ENCODE measurements at regions of chr18 and their contacts with region 1.

Region 1: GRCh38 chr18:32018331-32019250 is at the start of gene RNF125:
- DNase-seq: peak; percentile 83 to 97 (median 95)
- ATAC-seq: peak; percentile 87
- H3K4me3 ChIP-seq: peak within 1 kb of the TSS; percentile 89
- H3K4me3 Mint-ChIP-seq: peak within 1 kb of the TSS; percentile 87 to 99 (median 96)
- H3K27ac ChIP-seq: peak within 1 kb of the TSS; percentile 87
- H3K27ac Mint-ChIP-seq: peak within 1 kb of the TSS; percentile 87 to 99 (median 96)
- H3K4me1 ChIP-seq: peaks cover 34% of the 10 kb centered on the region in 2 donors
- H3K4me1 Mint-ChIP-seq: peaks cover 36 to 72% (median 57%) of the 10 kb centered on the region in 7 donors
- H3K27me3 ChIP-seq: no peaks in the 10 kb centered on the region
- H3K27me3 Mint-ChIP-seq: peaks cover 0 to 5% (median 0%) of the 10 kb centered on the region in 5 donors
- total RNA-seq, gene RNF125: 30.3 to 59.8 (median 37.1) TPM

Region 2: GRCh38 chr18:31957728-31958127 is 60.9 kb before region 1 on chr18:
- CTCF ChIA-PET with region 1: no interaction called
- POLR2A ChIA-PET with region 1: no interaction called
- intact Hi-C with region 1: loop called in 1 of 2 experiments (anchors 1 kb)
- DNase-seq: no peak
- ATAC-seq: no peak
- H3K4me3 ChIP-seq: no peak overlapping the region
- H3K4me3 Mint-ChIP-seq: no peak overlapping the region
- H3K27ac ChIP-seq: no peak overlapping the region
- H3K27ac Mint-ChIP-seq: no peak overlapping the region
- H3K4me1 ChIP-seq: no peaks in the 10 kb centered on the region
- H3K4me1 Mint-ChIP-seq: peaks cover 0 to 2% (median 0%) of the 10 kb centered on the region in 7 donors
- H3K27me3 ChIP-seq: no peaks in the 10 kb centered on the region
- H3K27me3 Mint-ChIP-seq: peaks cover 0 to under 1% (median 0%) of the 10 kb centered on the region in 5 donors

Region 3: DNA sequence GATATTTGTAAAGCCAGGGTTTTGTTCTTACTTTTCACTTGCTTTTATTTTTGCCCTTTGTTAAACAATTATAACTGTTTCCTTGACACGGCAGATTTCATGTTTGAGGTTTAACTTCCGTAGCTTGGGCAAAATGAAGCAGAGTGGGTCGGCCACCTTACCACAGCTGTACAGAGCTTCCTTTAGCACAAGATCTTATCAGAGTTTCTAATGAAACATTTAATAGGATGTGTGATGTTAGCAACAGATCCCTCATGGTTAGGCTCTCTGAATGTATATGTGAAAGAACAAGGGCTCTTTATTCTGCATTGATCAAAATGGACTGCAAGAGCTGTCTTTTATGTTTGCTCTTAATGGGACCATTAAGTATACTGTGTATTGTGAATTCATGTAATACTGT is 22.3 kb after region 1 on chr18:
- CTCF ChIA-PET with region 1: interaction called, 16 read pairs
- POLR2A ChIA-PET with region 1: interaction called, 52 read pairs
- intact Hi-C with region 1: loop called (anchors 1 kb)
- DNase-seq: peak in 8 of 9 donors; percentile 19 to 66 (median 44)
- ATAC-seq: peak; percentile 87
- H3K4me3 ChIP-seq: peak overlapping the region; percentile 12
- H3K4me3 Mint-ChIP-seq: peak overlapping the region; percentile 14 to 80 (median 73)
- H3K27ac ChIP-seq: peak overlapping the region; percentile 1
- H3K27ac Mint-ChIP-seq: peak overlapping the region; percentile 0 to 85 (median 65)
- H3K4me1 ChIP-seq: peaks cover 25 to 61% of the 10 kb centered on the region in 2 donors
- H3K4me1 Mint-ChIP-seq: peaks cover 35 to 69% (median 61%) of the 10 kb centered on the region in 7 donors
- H3K27me3 ChIP-seq: no peaks in the 10 kb centered on the region
- H3K27me3 Mint-ChIP-seq: no peaks in the 10 kb centered on the region

Region 4: GRCh38 chr18:32056613-32057358 is 38.2 kb after region 1 on chr18:
- CTCF ChIA-PET with region 1: interaction called, 4 read pairs
- POLR2A ChIA-PET with region 1: interaction called, 4 read pairs
- intact Hi-C with region 1: loop called in 1 of 2 experiments (anchors 5 kb)
- DNase-seq: no peak
- ATAC-seq: no peak
- H3K4me3 ChIP-seq: no peak overlapping the region
- H3K4me3 Mint-ChIP-seq: peak overlapping the region in 1 of 10 donors; percentile 14
- H3K27ac ChIP-seq: no peak overlapping the region
- H3K27ac Mint-ChIP-seq: peak overlapping the region in 5 of 9 donors; percentile 7 to 71 (median 54)
- H3K4me1 ChIP-seq: peaks cover 10 to 14% of the 10 kb centered on the region in 2 donors
- H3K4me1 Mint-ChIP-seq: peaks cover 16 to 66% (median 56%) of the 10 kb centered on the region in 7 donors
- H3K27me3 ChIP-seq: no peaks in the 10 kb centered on the region
- H3K27me3 Mint-ChIP-seq: no peaks in the 10 kb centered on the region

Region 5: DNA sequence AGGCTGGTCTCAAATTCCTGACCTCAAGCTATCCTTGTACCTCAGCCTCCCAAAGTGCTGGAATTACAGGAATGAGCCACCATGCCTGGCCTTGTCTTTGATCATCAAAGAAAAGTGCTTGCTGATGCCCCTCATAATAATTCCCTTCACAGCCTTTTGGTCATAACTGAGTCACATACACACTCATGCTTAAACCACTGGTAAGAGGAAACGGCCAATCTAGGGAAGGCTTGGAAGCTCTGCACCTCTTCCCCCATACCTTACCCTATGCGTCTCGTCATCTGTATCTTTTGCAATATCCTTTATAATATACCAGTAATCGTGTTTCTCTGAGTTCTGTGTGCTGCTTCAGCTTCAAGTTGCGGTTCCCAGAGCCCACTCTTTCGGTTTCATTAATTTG is 68.3 kb after region 1 on chr18:
- CTCF ChIA-PET with region 1: interaction called, 8 read pairs
- POLR2A ChIA-PET with region 1: interaction called, 100 read pairs
- intact Hi-C with region 1: loop called (anchors 1 kb)
- DNase-seq: no peak
- ATAC-seq: peak; percentile 18
- H3K4me3 ChIP-seq: no peak overlapping the region
- H3K4me3 Mint-ChIP-seq: peak overlapping the region in 5 of 10 donors; percentile 3 to 82 (median 29)
- H3K27ac ChIP-seq: no peak overlapping the region
- H3K27ac Mint-ChIP-seq: peak overlapping the region in 4 of 9 donors; percentile 38 to 100 (median 54)
- H3K4me1 ChIP-seq: peaks cover 21 to 27% of the 10 kb centered on the region in 2 donors
- H3K4me1 Mint-ChIP-seq: peaks cover 19 to 62% (median 43%) of the 10 kb centered on the region in 7 donors
- H3K27me3 ChIP-seq: no peaks in the 10 kb centered on the region
- H3K27me3 Mint-ChIP-seq: peaks cover 0 to 2% (median 0%) of the 10 kb centered on the region in 5 donors

Region 6: DNA sequence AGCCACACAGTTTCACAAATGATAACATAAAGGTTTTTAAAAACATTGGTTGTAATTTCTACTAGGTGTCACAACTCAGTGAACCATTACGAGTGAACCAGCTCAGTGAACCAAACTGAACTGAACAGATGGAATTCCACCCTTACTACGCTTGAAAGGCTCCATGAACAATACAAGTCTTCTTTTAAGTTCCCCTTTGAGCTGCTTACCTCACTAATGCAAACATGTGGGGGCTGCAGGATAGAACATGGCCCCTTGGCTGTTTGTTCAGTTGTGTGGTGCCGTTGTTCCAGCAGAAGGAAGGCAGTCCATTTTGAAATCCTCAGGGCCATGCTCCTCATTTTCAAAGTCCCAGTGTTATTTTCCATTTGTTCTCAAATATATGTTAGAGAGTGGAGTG is 785.0 kb after region 1 on chr18:
- CTCF ChIA-PET with region 1: no interaction called
- POLR2A ChIA-PET with region 1: no interaction called
- intact Hi-C with region 1: no loop called
- DNase-seq: no peak
- ATAC-seq: peak; percentile 20
- H3K4me3 ChIP-seq: no peak overlapping the region
- H3K4me3 Mint-ChIP-seq: no peak overlapping the region
- H3K27ac ChIP-seq: no peak overlapping the region
- H3K27ac Mint-ChIP-seq: no peak overlapping the region
- H3K4me1 ChIP-seq: no peaks in the 10 kb centered on the region
- H3K4me1 Mint-ChIP-seq: no peaks in the 10 kb centered on the region
- H3K27me3 ChIP-seq: no peaks in the 10 kb centered on the region
- H3K27me3 Mint-ChIP-seq: peaks cover 0 to 7% (median 0%) of the 10 kb centered on the region in 5 donors

Region 7: GRCh38 chr18:33404244-33404873 is 1385.8 kb after region 1 on chr18:
- CTCF ChIA-PET with region 1: no interaction called
- POLR2A ChIA-PET with region 1: no interaction called
- intact Hi-C with region 1: no loop called
- DNase-seq: no peak
- ATAC-seq: no peak
- H3K4me3 ChIP-seq: no peak overlapping the region
- H3K4me3 Mint-ChIP-seq: no peak overlapping the region
- H3K27ac ChIP-seq: no peak overlapping the region
- H3K27ac Mint-ChIP-seq: no peak overlapping the region
- H3K4me1 ChIP-seq: no peaks in the 10 kb centered on the region
- H3K4me1 Mint-ChIP-seq: no peaks in the 10 kb centered on the region
- H3K27me3 ChIP-seq: no peaks in the 10 kb centered on the region
- H3K27me3 Mint-ChIP-seq: no peaks in the 10 kb centered on the region

Measured in naive thymus-derived CD4-positive, alpha-beta T cell (primary cell).